SK-N-SH (cell line): ENCODE measurements at regions of chr11 and their contacts with region 1.

Region 1: DNA sequence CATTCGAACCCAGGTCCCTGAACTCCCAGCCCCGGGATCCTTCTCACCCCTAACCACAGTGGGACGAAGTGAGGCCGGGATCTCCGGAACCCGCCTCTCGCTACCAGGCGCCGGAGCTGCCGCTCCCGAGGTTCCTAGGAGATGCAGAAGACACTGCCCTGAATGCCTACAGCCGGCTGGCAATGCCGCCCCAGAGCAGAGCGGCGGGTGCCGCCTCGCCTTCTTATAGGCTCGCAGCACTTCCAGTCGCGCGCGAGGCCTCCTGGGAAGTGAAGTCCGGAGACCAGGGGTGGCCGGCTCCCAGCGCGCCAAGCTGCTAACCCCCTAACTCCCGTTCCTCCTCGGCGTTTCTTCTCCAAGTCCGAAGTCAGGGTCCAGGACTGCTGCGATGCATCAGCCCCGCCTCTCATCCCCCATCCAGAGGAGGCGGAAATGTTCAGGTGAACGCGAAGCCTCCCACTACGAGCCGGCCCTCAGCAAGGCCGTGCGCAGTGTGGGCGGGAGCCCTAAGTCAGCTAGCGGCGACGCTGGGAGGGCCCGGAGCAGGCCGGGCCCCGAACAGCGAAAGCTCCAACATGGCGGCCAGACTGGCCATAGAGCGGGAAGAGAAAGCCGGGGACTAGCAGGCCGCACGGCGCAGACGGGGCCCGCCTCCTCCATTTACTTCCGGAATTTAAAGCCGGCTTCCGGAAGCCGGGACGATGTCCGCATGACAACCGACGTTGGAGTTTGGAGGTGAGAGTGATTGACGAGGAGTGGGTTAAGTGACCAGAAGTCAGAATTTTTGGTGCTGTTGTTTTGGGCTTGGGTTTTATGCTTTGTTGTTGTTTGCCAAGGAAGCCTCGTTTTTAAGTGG is at the starts of genes CYB561A3 and TMEM138:
- DNase-seq: peak; percentile 93
- H3K4me3 ChIP-seq: peak within 1 kb of the TSS; percentile 68 to 71
- H3K27ac ChIP-seq: peak within 1 kb of the TSS; percentile 98 to 99
- H3K4me1 ChIP-seq: peaks cover 9 to 14% of the 10 kb centered on the region in 2 experiments; a peak in 3 of 4 replicates
- H3K27me3 ChIP-seq: no peaks in the 10 kb centered on the region
- CTCF ChIP-seq: no peak
- EP300 ChIP-seq: no peak
- RAD21 ChIP-seq: no peak
- polyA plus RNA-seq, gene CYB561A3: 70.0 and 76.4 TPM in 2 replicates
- polyA plus RNA-seq, gene TMEM138: 82.2 and 129 TPM in 2 replicates

Region 2: GRCh38 chr11:61315260-61315659 is 46.7 kb before region 1 on chr11:
- CTCF ChIA-PET with region 1: no interaction called
- POLR2A ChIA-PET with region 1: no interaction called
- DNase-seq: no peak
- H3K4me3 ChIP-seq: no peak overlapping the region
- H3K27ac ChIP-seq: no peak overlapping the region
- H3K4me1 ChIP-seq: no peaks in the 10 kb centered on the region
- H3K27me3 ChIP-seq: no peaks in the 10 kb centered on the region
- CTCF ChIP-seq: no peak
- EP300 ChIP-seq: no peak
- RAD21 ChIP-seq: no peak

Region 3: GRCh38 chr11:61347916-61348461 is 13.9 kb before region 1 on chr11:
- CTCF ChIA-PET with region 1: interaction called, 6 read pairs
- POLR2A ChIA-PET with region 1: interaction called, 57 read pairs
- DNase-seq: no peak
- H3K4me3 ChIP-seq: no peak overlapping the region
- H3K27ac ChIP-seq: no peak overlapping the region; a peak in 1 of 4 replicates
- H3K4me1 ChIP-seq: peaks cover 0 to 29% of the 10 kb centered on the region in 2 experiments; a peak in 1 of 4 replicates
- H3K27me3 ChIP-seq: no peaks in the 10 kb centered on the region
- CTCF ChIP-seq: no peak
- EP300 ChIP-seq: no peak
- RAD21 ChIP-seq: no peak

Region 4: GRCh38 chr11:61392981-61393595 is 31.2 kb after region 1 on chr11:
- CTCF ChIA-PET with region 1: interaction called, 10 read pairs
- POLR2A ChIA-PET with region 1: interaction called, 14 read pairs
- DNase-seq: peak; percentile 52
- H3K4me3 ChIP-seq: peak overlapping the region; percentile 63 to 70
- H3K27ac ChIP-seq: no peak overlapping the region
- H3K4me1 ChIP-seq: peaks cover 0 to 6% of the 10 kb centered on the region in 2 experiments; a peak in 2 of 4 replicates
- H3K27me3 ChIP-seq: no peaks in the 10 kb centered on the region
- CTCF ChIP-seq: peak; percentile 28
- EP300 ChIP-seq: no peak
- RAD21 ChIP-seq: peak; percentile 52